CD14-positive monocyte (primary cell): ENCODE measurements at regions of chr9 and their contacts with region 1.

Region 1: GRCh38 chr9:132341177-132341840 is 13.5 kb downstream of the SETX start:
- DNase-seq: no peak
- H3K4me3 ChIP-seq: no peak overlapping the region
- H3K4me3 Mint-ChIP-seq: no peak overlapping the region
- H3K27ac ChIP-seq: no peak overlapping the region
- H3K27ac Mint-ChIP-seq: peak overlapping the region in 2 of 7 donors; percentile 48 to 84
- H3K4me1 ChIP-seq: no peaks in the 10 kb centered on the region
- H3K4me1 Mint-ChIP-seq: no peaks in the 10 kb centered on the region
- H3K27me3 ChIP-seq: no peaks in the 10 kb centered on the region
- H3K27me3 Mint-ChIP-seq: no peaks in the 10 kb centered on the region
- CTCF ChIP-seq: no peak

Region 2: GRCh38 chr9:131567910-131568309 is 773.4 kb before region 1 on chr9:
- intact Hi-C with region 1: no loop called
- DNase-seq: no peak
- H3K4me3 ChIP-seq: no peak overlapping the region
- H3K4me3 Mint-ChIP-seq: no peak overlapping the region
- H3K27ac ChIP-seq: no peak overlapping the region
- H3K27ac Mint-ChIP-seq: no peak overlapping the region
- H3K4me1 ChIP-seq: no peaks in the 10 kb centered on the region
- H3K4me1 Mint-ChIP-seq: no peaks in the 10 kb centered on the region
- H3K27me3 ChIP-seq: no peaks in the 10 kb centered on the region
- H3K27me3 Mint-ChIP-seq: peaks cover 0 to under 1% (median 0%) of the 10 kb centered on the region in 3 donors
- CTCF ChIP-seq: no peak

Region 3: DNA sequence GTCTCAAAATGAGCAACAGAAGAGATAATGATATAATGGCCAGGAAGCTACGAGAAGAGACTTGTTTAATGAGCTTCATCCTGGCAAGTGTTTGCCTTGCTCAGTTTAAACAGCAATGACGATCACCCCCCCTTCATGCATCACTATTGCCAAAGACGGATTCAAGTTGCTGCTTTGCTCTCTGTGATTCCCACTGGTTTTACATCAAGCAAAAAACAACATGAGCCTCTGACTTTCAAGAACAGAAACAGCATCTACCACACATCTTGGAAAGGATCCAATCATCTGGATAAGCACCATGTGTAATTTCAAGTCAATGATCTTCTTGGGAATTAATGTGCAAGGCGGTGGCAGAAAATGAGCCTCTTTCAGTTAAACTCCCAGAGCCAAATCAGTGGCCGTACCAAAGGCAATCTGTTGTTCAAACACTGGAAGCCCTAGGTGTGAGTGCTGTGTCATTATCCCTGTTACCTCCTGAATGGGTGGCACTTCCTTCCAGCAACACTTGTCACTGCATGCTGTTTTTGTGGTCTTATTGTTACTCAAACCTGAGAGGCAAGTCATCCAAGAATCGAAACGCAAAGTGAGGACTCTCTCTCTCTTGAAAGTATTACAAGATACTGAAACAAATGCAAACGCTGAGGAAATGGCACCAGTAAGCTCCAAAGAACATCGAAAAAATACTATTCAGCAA is 334.5 kb before region 1 on chr9:
- intact Hi-C with region 1: no loop called
- DNase-seq: no peak
- H3K4me3 ChIP-seq: no peak overlapping the region
- H3K4me3 Mint-ChIP-seq: no peak overlapping the region
- H3K27ac ChIP-seq: no peak overlapping the region
- H3K27ac Mint-ChIP-seq: peak overlapping the region in 1 of 7 donors; percentile 44
- H3K4me1 ChIP-seq: peaks cover 3 to 16% of the 10 kb centered on the region in 2 donors
- H3K4me1 Mint-ChIP-seq: peaks cover 48% of the 10 kb centered on the region
- H3K27me3 ChIP-seq: no peaks in the 10 kb centered on the region
- H3K27me3 Mint-ChIP-seq: peaks cover 0 to 5% (median 0%) of the 10 kb centered on the region in 3 donors
- CTCF ChIP-seq: no peak

Region 4: DNA sequence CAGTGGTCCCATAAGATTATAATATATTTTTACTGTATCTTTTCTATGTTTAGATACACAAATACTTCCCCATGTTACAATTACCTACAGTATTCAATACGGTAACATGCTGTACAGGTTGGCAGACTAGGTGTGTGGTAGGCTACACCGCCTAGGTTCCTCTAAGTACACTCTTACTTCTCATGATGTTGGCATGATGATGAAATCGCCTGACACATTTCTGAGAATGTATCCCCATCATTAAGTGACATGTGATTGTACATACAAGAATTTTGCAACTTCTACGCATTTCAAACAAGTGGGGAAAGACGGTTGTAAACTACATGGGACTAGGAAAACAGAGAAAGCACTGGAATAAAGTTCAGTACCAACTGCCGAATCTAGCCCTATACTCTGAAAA is 39.8 kb before region 1 on chr9:
- intact Hi-C with region 1: loop called in 1 of 2 experiments (anchors 5 kb)
- DNase-seq: no peak
- H3K4me3 ChIP-seq: no peak overlapping the region
- H3K4me3 Mint-ChIP-seq: no peak overlapping the region
- H3K27ac ChIP-seq: no peak overlapping the region
- H3K27ac Mint-ChIP-seq: no peak overlapping the region
- H3K4me1 ChIP-seq: no peaks in the 10 kb centered on the region
- H3K4me1 Mint-ChIP-seq: no peaks in the 10 kb centered on the region
- H3K27me3 ChIP-seq: no peaks in the 10 kb centered on the region
- H3K27me3 Mint-ChIP-seq: no peaks in the 10 kb centered on the region
- CTCF ChIP-seq: no peak

Region 5: GRCh38 chr9:132424857-132425686 is 83.8 kb after region 1 on chr9:
- intact Hi-C with region 1: no loop called
- DNase-seq: no peak
- H3K4me3 ChIP-seq: no peak overlapping the region
- H3K4me3 Mint-ChIP-seq: peak overlapping the region in 1 of 2 donors; percentile 69
- H3K27ac ChIP-seq: no peak overlapping the region
- H3K27ac Mint-ChIP-seq: no peak overlapping the region
- H3K4me1 ChIP-seq: no peaks in the 10 kb centered on the region
- H3K4me1 Mint-ChIP-seq: no peaks in the 10 kb centered on the region
- H3K27me3 ChIP-seq: peaks cover 20 to 25% of the 10 kb centered on the region in 2 donors
- H3K27me3 Mint-ChIP-seq: peaks cover 40 to 57% (median 56%) of the 10 kb centered on the region in 3 donors
- CTCF ChIP-seq: no peak